GM12878 (cell line): ENCODE measurements at regions of chr4 and their contacts with region 1.

Region 1: DNA sequence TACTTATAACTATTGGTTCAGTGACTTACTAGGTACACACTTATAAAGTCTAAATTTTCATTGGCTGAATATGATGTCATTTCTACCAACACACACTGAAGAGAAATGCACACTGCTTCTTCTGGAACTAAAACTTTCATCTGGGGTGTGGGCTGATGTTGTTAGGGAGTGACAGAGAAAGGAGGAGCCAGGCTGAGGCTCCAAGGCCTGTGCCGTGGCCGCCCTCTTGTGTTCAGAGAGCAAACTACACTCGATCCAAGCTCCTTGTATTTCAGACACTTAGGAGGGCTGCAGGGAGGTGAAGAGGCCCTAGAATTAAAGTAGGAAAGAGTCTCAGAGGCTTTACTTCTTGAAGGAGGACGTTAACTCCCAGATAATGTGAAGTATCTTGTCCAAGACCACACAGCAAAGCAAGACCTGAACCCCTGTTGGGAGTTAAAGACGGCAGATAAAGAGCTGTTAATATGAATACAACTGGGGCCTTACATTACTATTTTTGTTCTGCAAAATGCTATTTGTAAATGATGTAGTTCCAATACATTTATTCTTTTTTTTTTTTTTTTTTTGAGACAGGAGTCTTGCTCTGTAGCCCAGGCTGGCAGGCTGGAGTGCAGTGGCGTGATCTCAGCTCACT is 137.5 kb downstream of the AFAP1 start:
- DNase-seq: no peak
- ATAC-seq: peak; percentile 96
- H3K4me3 ChIP-seq: no peak overlapping the region
- H3K27ac ChIP-seq: no peak overlapping the region
- H3K4me1 ChIP-seq: no peaks in the 10 kb centered on the region
- H3K27me3 ChIP-seq: 0 out of 4 replicates have a peak, but pooled peaks cover 0 to 3% of the 10 kb centered on the region in 2 experiments
- CTCF ChIP-seq: peak; percentile 91 to 95 (median 91)
- EP300 ChIP-seq: no peak
- POLR2A ChIP-seq: no peak
- RAD21 ChIP-seq: peak; percentile 98

Region 2: DNA sequence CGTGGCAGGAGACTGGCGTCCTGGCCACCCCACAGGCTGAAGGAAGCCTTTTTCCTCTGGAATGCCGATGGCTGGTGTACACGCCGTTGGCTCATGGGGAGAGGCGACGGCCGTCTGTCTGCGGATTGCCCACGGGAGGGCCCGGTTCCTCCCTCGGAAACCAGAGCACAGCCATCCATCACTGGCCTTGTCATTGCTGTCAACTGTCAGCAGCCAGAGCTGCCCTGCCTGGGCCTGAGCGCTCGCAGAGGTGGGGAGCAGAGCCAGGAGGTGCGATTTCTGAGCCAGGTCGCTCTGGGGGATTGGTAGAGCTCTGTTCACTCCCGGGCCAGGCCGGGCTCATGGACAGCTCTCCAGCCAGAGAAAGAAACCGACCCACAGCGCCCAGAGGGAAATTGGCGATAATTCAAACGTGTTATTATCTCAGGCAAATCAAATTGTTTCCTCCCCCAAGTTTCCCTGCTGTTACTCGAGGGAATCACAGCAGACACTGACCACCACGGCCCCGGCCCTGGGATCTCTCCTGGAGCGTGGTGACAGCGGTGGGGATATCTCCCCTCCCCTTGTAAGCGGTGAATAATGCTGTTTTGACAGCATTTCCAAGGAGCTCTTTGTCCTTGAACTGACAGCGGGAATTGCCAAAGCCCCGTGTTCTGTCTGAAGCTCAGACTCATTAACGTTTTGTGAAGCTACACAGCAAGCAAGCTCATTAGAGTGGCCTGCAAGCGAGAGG is 146.5 kb before region 1 on chr4:
- CTCF ChIA-PET with region 1: no interaction called
- POLR2A ChIA-PET with region 1: no interaction called
- RAD21 ChIA-PET with region 1: no interaction called
- SMC1A ChIA-PET with region 1: no interaction called
- in situ Hi-C with region 1: no loop called
- intact Hi-C with region 1: no loop called
- DNase-seq: no peak
- ATAC-seq: no peak
- H3K4me3 ChIP-seq: no peak overlapping the region
- H3K27ac ChIP-seq: no peak overlapping the region
- H3K4me1 ChIP-seq: no peaks in the 10 kb centered on the region
- H3K27me3 ChIP-seq: no peaks in the 10 kb centered on the region; a peak in 2 of 4 replicates
- CTCF ChIP-seq: no peak
- EP300 ChIP-seq: no peak
- POLR2A ChIP-seq: no peak
- RAD21 ChIP-seq: no peak

Region 3: GRCh38 chr4:7761720-7762119 is 40.5 kb before region 1 on chr4:
- CTCF ChIA-PET with region 1: interaction called, 27 read pairs
- POLR2A ChIA-PET with region 1: no interaction called
- RAD21 ChIA-PET with region 1: interaction called, 14 read pairs
- SMC1A ChIA-PET with region 1: interaction called, 7 read pairs
- in situ Hi-C with region 1: loop called (anchors 5 kb)
- intact Hi-C with region 1: loop called (anchors 1 kb)
- DNase-seq: no peak
- ATAC-seq: peak; percentile 96
- H3K4me3 ChIP-seq: no peak overlapping the region
- H3K27ac ChIP-seq: no peak overlapping the region
- H3K4me1 ChIP-seq: peaks cover 4% of the 10 kb centered on the region; the same call in 1 of the 2 replicates
- H3K27me3 ChIP-seq: peaks cover 0 to 2% of the 10 kb centered on the region in 2 experiments; a peak in 2 of 4 replicates
- CTCF ChIP-seq: peak; percentile 66 to 85 (median 84)
- EP300 ChIP-seq: no peak
- POLR2A ChIP-seq: no peak
- RAD21 ChIP-seq: peak; percentile 82

Region 4: DNA sequence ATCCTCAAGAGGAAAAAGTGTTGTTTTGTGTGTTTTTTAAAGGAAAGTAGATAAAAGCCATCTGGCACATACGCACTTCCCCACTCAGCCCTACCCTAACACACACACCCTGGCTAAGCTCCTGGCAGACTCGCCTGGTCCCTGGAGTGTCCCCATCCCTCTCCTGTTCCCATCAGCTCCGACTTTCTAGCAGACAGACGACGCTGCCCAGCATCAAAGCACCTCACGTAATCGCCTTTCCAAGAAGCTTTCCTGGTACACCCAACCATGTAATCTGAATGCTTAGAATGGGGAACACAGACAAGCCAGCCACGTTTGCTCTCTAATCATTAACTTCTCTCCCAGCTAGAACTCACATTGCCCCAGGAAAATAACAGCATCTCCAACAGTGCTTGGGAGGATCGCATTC is 21.2 kb after region 1 on chr4:
- CTCF ChIA-PET with region 1: interaction called, 14 read pairs
- POLR2A ChIA-PET with region 1: no interaction called
- RAD21 ChIA-PET with region 1: no interaction called
- SMC1A ChIA-PET with region 1: no interaction called
- in situ Hi-C with region 1: no loop called
- intact Hi-C with region 1: no loop called
- DNase-seq: no peak
- ATAC-seq: no peak
- H3K4me3 ChIP-seq: no peak overlapping the region
- H3K27ac ChIP-seq: no peak overlapping the region
- H3K4me1 ChIP-seq: no peaks in the 10 kb centered on the region
- H3K27me3 ChIP-seq: peaks cover 0 to 10% of the 10 kb centered on the region in 2 experiments
- CTCF ChIP-seq: no peak
- EP300 ChIP-seq: no peak
- POLR2A ChIP-seq: no peak
- RAD21 ChIP-seq: no peak

Region 5: GRCh38 chr4:7987148-7987989 is 185.2 kb after region 1 on chr4:
- CTCF ChIA-PET with region 1: interaction called, 104 read pairs
- POLR2A ChIA-PET with region 1: no interaction called
- RAD21 ChIA-PET with region 1: interaction called, 12 read pairs
- SMC1A ChIA-PET with region 1: interaction called, 26 read pairs
- in situ Hi-C with region 1: loop called (anchors 5 kb)
- intact Hi-C with region 1: loop called (anchors 1 kb)
- DNase-seq: peak; percentile 23
- ATAC-seq: peak; percentile 91
- H3K4me3 ChIP-seq: no peak overlapping the region
- H3K27ac ChIP-seq: no peak overlapping the region
- H3K4me1 ChIP-seq: no peaks in the 10 kb centered on the region
- H3K27me3 ChIP-seq: no peaks in the 10 kb centered on the region; a peak in 1 of 4 replicates
- CTCF ChIP-seq: peak; percentile 81 to 86 (median 84)
- EP300 ChIP-seq: no peak
- POLR2A ChIP-seq: no peak
- RAD21 ChIP-seq: peak; percentile 94